Pancreas (tissue), 10 donors: ENCODE measurements at regions of chr3 and their contacts with region 1.

Region 1: DNA sequence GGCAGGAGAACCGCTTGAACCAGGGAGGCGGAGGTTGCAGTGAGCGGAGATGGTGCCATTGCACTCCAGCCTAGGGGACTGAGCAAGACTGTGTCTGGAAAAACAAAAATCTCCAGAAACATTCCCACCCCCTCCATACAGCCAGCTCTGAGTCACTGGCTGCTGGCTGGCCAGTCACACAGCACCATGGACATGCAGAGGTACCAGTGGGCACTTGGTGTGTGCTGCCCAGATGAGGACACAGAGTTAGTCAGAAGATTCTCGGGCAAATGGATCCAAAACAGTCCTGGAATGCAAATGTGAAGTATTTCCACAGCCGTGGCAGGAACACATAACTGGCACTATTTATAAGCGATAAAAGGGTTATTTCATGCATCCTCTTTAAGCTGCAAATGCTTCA is 44.6 kb downstream of the BDH1 start:
- DNase-seq: no peak
- ATAC-seq: no peak
- H3K4me3 ChIP-seq: no peak overlapping the region
- H3K27ac ChIP-seq: no peak overlapping the region
- H3K4me1 ChIP-seq: no peaks in the 10 kb centered on the region
- H3K27me3 ChIP-seq: no peaks in the 10 kb centered on the region
- CTCF ChIP-seq: no peak

Region 2: DNA sequence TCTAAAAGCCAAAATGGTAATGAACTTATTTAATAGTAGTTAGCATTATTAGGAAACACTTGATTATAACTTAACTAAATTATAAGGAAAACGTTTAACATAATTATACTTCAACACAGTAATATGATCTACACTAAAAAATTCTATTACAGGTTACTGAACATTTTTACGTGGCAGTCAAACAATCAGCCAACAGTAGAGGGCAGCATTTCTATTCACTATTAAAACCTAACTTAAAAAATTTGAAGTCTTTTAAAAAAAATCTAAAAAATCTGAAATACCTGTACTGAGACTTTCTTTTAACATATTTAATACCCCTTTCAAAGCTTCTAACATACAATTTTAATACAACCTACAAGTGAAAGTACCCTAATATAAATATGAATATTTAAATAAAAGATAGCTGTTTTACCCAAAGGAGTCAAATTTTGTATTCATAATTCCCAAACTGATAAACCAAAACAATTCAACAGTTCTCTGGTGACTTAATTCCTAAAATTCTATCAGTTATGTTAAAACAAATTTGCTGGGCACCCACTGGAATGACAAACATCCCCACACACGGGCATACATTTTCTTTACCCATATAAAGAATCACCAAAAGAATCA is 254.2 kb before region 1 on chr3:
- intact Hi-C with region 1: loop called in 2 of 3 experiments (anchors 5 kb)
- DNase-seq: peak in 1 of 6 donors; percentile 26
- ATAC-seq: peak in 3 of 4 donors; percentile 63 to 72 (median 65)
- H3K4me3 ChIP-seq: no peak overlapping the region
- H3K27ac ChIP-seq: no peak overlapping the region
- H3K4me1 ChIP-seq: peaks cover 0 to 4% (median 0%) of the 10 kb centered on the region in 3 donors
- H3K27me3 ChIP-seq: no peaks in the 10 kb centered on the region
- CTCF ChIP-seq: peak; percentile 36 to 64 (median 48)

Region 3: GRCh38 chr3:197394464-197395321 is 116.4 kb before region 1 on chr3:
- intact Hi-C with region 1: no loop called
- DNase-seq: no peak
- ATAC-seq: peak in 1 of 4 donors; percentile 76
- H3K4me3 ChIP-seq: no peak overlapping the region
- H3K27ac ChIP-seq: no peak overlapping the region
- H3K4me1 ChIP-seq: no peaks in the 10 kb centered on the region
- H3K27me3 ChIP-seq: no peaks in the 10 kb centered on the region
- CTCF ChIP-seq: no peak